OCI-LY7 (cell line): ENCODE measurements at regions of chr17 and their contacts with region 1.

Region 1: GRCh38 chr17:5706577-5707216 is 122.4 kb upstream of the NLRP1 start:
- DNase-seq: peak; percentile 59
- H3K4me3 ChIP-seq: no peak overlapping the region
- H3K27ac ChIP-seq: no peak overlapping the region
- H3K4me1 ChIP-seq: no peaks in the 10 kb centered on the region
- CTCF ChIP-seq: peak; percentile 84

Region 2: DNA sequence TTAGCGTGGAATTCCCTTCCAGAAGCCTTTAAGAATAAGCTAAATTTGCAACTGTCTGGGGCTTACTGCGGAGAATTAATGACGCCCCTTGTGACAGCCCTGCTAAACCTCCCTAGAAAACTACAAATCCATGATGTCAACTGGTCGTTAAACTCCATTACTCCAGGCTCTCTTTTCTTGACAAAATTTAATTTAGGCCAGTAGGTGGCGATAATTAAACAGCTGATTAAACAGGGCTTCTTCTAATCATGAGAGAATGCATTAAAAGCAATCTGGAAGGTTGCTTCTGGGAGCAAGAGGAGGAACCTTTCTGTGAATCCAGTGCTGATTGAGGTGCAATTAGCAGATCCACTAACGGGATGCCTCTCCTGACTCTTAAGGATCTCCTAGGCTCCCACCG is 114.3 kb before region 1 on chr17:
- CTCF ChIA-PET with region 1: no interaction called
- POLR2A ChIA-PET with region 1: no interaction called
- intact Hi-C with region 1: loop called (anchors 1 kb)
- DNase-seq: peak; percentile 62
- H3K4me3 ChIP-seq: no peak overlapping the region
- H3K27ac ChIP-seq: no peak overlapping the region
- H3K4me1 ChIP-seq: no peaks in the 10 kb centered on the region
- CTCF ChIP-seq: peak; percentile 82

Region 3: GRCh38 chr17:6421700-6422604 is 715.3 kb after region 1 on chr17:
- CTCF ChIA-PET with region 1: no interaction called
- POLR2A ChIA-PET with region 1: no interaction called
- intact Hi-C with region 1: loop called (anchors 5 kb)
- DNase-seq: peak; percentile 73
- H3K4me3 ChIP-seq: no peak overlapping the region
- H3K27ac ChIP-seq: no peak overlapping the region
- H3K4me1 ChIP-seq: no peaks in the 10 kb centered on the region
- CTCF ChIP-seq: peak; percentile 88